ENCODE measurements at regions of chr7 and their contacts with region 1.

Region 1: GRCh38 chr7:21253740-21254687 is 173.9 kb upstream of the SP4 start:
- DNase-seq: no peak
- ATAC-seq: no peak
- H3K4me3 Mint-ChIP-seq: no peak overlapping the region
- H3K27ac Mint-ChIP-seq: no peak overlapping the region
- H3K4me1 Mint-ChIP-seq: no peaks in the 10 kb centered on the region
- H3K27me3 Mint-ChIP-seq: peaks cover 37% of the 10 kb centered on the region
- CTCF ChIP-seq: no peak

Region 2: GRCh38 chr7:19713676-19714075 is 1540.3 kb before region 1 on chr7:
- CTCF ChIA-PET with region 1: no interaction called
- POLR2A ChIA-PET with region 1: no interaction called
- intact Hi-C with region 1: loop called (anchors 10 kb)
- DNase-seq: no peak
- ATAC-seq: no peak
- H3K4me3 Mint-ChIP-seq: no peak overlapping the region
- H3K27ac Mint-ChIP-seq: no peak overlapping the region
- H3K4me1 Mint-ChIP-seq: peaks cover 14% of the 10 kb centered on the region
- H3K27me3 Mint-ChIP-seq: peaks cover 9% of the 10 kb centered on the region
- CTCF ChIP-seq: no peak

Region 3: DNA sequence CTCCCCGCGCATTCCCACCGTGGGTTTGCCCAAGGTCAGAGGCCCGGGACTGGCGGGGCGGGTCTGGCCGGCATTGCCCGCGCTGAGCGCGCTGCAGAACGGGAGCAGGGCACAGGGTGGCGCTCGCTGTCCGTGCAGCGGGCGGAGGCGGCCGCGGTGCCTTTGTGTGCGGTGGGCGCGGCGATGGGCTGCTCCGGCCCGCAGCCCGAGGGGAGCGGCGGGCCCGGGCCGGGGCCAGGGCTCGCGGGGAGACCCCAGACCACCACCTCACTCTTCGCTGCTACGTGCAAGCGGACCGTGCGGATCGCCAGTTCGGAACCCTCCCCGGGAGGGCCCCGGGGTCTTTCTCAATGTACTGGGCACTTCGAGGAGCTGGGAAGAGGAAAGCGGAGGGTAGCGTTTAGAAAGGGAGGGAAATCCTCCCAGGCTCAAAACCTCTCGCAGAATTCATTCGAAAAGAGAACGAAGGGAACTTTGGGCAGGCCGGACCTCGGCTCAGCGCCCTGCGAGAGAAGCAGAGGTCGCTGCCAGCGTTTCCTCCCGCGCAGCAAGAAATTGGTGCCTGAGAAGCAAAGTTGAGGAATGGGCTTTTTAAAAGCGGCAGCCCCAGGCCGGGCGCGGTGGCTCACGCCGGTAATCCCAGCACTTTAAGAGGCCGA is 475.8 kb before region 1 on chr7:
- CTCF ChIA-PET with region 1: no interaction called
- POLR2A ChIA-PET with region 1: no interaction called
- intact Hi-C with region 1: loop called (anchors 5 kb)
- DNase-seq: no peak
- ATAC-seq: no peak
- H3K4me3 Mint-ChIP-seq: no peak overlapping the region
- H3K27ac Mint-ChIP-seq: no peak overlapping the region
- H3K4me1 Mint-ChIP-seq: peaks cover 16% of the 10 kb centered on the region
- H3K27me3 Mint-ChIP-seq: peaks cover 61% of the 10 kb centered on the region
- CTCF ChIP-seq: no peak

Region 4: DNA sequence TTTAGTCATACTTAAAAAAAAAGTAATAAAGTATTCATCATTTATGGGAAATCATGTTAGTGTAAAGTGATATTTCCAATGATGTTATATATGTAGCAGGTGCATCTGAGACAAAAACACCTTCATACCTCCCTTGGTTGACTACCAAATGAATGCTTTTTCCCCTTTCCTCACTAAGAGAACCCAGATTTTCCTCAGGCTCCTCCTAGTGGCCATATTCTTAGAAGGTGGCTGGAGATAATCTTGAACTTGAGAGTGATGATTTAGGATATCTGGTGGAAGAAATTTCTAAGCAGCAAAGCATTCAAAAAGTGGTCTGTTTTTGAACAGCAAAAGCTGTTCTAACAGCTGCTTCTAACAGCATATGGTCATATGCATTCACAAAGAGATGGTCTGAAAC is 272.0 kb after region 1 on chr7:
- CTCF ChIA-PET with region 1: interaction called, 5 read pairs
- POLR2A ChIA-PET with region 1: no interaction called
- intact Hi-C with region 1: loop called (anchors 1 kb)
- DNase-seq: no peak
- ATAC-seq: no peak
- H3K4me3 Mint-ChIP-seq: no peak overlapping the region
- H3K27ac Mint-ChIP-seq: no peak overlapping the region
- H3K4me1 Mint-ChIP-seq: no peaks in the 10 kb centered on the region
- H3K27me3 Mint-ChIP-seq: no peaks in the 10 kb centered on the region
- CTCF ChIP-seq: no peak

Region 5: DNA sequence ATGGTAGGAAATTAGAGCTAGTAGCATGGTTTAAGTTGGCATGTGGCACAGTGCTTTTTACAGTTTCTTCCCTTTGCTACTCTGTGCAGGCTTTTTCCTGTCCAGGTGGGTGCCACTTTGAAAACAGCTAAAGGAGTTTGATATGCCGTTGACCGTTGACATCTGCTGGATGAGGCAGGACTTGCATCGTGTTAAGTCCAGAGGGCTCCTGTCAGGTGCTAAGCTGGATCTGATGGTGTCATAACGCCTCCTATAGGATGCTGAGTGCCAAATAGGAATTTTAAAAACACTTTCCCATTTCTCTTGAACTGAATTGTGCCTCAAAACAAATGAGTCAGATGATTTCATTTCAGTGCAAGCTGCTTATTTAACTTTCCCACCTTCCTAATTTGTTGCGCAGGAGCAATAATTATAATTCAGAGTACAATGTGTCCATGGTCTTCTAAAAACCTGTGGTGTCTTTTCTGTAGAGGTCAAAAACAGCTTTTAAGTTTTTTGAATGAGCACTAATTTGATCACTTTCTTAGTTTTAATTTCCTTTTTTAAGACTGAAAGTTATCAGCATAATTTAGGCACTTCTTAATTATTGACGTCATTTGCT is 513.4 kb after region 1 on chr7:
- CTCF ChIA-PET with region 1: interaction called, 6 read pairs
- POLR2A ChIA-PET with region 1: no interaction called
- intact Hi-C with region 1: loop called (anchors 1 kb)
- DNase-seq: no peak
- ATAC-seq: peak; percentile 47
- H3K4me3 Mint-ChIP-seq: no peak overlapping the region
- H3K27ac Mint-ChIP-seq: no peak overlapping the region
- H3K4me1 Mint-ChIP-seq: no peaks in the 10 kb centered on the region
- H3K27me3 Mint-ChIP-seq: peaks cover 11% of the 10 kb centered on the region
- CTCF ChIP-seq: no peak

Measured in activated B cell treated with CpG ODN at 0.5 μM for 24 hours (primary cell).